HEK293T (cell line): ENCODE measurements at regions of chr3 and their contacts with region 1.

Region 1: DNA sequence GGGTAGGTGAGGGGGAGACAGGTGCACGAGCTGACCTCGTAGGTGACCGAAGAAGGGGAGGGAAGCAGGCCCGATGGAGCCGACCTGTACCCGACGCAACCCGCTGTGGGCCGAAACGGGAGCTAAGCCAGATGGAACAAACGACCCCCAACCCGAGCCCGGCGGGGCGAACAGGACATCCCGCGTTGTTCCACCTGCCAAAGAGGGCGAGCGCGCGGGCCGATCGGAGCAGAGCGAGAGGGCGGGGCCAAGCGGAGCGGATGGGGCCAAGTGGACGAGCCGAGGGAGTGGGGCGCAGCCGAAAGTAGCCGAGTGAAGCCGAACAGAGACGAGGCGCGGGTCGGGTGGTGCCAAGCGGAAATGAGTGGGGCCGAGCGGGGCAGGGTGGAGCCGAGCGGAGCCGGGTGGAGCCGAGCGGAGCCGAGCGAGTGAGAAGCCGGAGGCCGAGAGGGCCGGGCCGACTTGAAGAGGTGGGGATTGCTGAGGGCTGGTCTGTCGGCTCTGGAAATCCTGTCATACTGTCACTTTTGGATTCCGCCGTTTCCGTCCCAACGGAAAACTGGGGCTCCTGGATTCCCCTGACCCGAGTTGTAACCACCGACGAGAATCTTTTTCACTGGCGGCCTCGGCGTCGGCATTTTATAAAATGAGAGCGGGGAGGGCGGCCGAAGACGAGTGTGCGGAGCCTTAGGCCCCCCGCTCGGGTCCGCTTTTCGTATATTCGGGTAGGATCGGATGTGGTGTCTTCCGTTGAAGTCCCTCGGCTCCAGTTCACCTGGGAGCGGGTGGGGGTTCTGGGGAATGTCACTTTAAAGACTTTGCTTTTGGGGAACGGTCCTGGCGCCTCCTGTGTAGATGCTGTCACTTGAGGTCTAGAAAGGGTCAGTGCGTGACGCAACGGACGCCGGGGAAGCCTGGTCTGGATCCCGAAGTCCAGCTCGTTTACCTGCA is 15.6 kb upstream of the WNT7A start:
- DNase-seq: peak; percentile 95

Region 2: GRCh38 chr3:13857702-13858413 is 37.6 kb before region 1 on chr3:
- CTCF ChIA-PET with region 1: no interaction called
- POLR2A ChIA-PET with region 1: no interaction called
- DNase-seq: no peak

Region 3: GRCh38 chr3:14113965-14114635 is 218.7 kb after region 1 on chr3:
- CTCF ChIA-PET with region 1: interaction called, 10 read pairs
- POLR2A ChIA-PET with region 1: no interaction called
- DNase-seq: no peak

Region 4: DNA sequence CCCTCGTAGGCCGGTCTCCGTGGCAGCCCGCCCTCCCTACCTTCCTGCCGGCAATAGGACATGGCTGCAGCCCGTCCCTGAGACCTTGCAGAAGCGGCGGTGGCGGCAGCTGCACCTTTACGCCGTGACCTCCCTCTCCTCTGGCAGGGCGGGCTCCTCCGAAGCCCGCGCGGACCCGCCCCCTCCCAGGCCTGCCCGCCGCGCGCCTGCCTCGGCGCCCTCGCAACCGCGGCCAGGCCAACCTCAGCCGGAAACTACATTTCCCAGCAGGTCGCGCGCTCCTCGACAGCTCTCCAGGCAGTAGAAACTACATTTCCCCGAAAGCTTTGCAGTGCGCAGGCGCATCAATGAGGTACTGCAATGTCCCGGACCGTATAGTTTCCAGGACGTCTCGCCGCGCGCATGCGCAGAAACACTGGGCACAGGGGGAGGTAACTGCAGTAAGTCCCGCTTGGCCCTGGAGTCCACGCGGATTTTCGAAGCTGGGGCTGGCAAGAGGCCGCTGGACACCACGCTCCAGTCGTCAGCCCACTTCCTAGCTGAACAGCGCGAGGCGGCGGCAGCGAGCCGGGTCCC is 229.3 kb after region 1 on chr3 and contains the starts of genes CHCHD4 and TMEM43:
- CTCF ChIA-PET with region 1: interaction called, 11 read pairs
- POLR2A ChIA-PET with region 1: interaction called, 6 read pairs
- DNase-seq: peak; percentile 98